Cardiac septum (tissue), 1 donor: ENCODE measurements at regions of chr18 and their contacts with region 1.

Region 1: GRCh38 chr18:58864146-58865032 is at the start of gene ZNF532:
- DNase-seq: no peak
- total RNA-seq, gene ZNF532: 71.8 TPM

Region 2: DNA sequence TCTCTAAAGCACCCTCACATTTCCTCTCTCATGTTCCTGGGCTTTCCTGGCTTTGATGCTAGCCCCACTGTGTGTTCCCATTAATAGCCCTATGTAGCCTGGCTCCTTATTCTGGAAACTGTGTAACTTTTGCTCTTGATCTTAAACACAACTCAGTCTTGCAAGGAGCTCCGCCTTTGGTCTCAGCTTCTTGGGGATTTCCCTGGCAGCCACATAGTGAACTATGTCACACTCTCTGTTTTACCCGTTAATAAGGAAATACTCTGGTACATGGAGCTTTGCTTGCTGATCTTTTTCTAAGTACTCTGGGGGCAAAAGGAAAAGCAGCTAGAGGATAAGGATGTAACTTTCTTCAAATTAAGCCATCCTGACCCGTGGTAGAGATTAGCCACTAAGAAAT is 561.0 kb before region 1 on chr18:
- intact Hi-C with region 1: no loop called
- DNase-seq: no peak

Region 3: DNA sequence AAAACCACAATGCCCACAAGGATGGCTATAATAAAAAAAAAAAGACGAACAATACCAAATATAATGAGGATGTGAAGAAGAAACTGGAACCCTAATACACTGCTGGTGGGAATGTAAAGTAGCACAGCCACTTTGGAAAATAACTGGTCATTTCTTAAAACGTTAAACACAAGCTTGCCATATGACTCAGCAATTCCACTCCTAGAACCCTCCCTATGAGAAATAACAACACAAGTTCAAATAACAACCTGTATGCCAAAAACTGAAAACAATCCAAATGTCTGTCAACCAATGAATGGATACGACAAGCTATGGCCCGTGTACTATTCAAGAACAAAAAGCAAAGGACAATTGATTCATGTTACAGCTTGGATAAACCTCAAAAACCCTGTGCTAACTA is 228.5 kb before region 1 on chr18:
- intact Hi-C with region 1: no loop called
- DNase-seq: no peak

Region 4: DNA sequence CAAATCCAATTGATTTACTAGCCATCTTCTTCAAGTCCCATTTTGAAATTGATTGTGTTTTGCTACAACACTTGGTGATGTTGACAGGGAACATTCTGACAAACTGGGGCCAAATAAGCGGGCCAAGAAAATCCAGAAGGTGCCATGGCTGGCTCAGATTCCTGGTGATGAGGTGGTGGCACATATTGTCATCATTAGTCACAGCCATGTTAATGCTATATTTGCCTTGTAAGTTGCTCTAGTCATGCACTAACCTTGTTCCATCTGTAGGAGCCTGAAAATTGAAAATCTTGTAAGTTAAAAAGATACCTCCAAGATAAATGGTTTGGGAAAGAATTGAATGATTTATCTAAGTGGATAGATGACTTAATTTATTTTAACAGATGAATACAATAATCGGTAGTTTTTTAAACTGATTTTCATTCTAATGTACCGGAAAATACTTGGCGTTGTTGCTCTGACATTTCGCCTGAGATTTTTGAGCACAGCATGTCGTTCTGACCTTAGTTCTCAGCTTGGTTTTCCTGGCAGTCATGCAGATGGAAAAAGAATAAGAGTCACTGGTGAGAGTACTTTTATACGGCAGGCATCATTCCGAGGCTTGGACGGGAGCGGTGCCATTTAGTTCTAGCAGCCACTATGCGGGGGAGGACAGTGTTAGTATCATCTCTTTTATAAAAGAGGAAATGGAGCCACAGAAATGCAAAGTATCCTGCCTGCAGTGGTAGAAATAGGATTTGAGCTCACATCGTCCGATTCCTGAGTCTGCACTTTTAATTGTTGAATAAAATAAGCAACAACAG is 134.2 kb after region 1 on chr18:
- intact Hi-C with region 1: loop called (anchors 1 kb)
- DNase-seq: no peak

Region 5: DNA sequence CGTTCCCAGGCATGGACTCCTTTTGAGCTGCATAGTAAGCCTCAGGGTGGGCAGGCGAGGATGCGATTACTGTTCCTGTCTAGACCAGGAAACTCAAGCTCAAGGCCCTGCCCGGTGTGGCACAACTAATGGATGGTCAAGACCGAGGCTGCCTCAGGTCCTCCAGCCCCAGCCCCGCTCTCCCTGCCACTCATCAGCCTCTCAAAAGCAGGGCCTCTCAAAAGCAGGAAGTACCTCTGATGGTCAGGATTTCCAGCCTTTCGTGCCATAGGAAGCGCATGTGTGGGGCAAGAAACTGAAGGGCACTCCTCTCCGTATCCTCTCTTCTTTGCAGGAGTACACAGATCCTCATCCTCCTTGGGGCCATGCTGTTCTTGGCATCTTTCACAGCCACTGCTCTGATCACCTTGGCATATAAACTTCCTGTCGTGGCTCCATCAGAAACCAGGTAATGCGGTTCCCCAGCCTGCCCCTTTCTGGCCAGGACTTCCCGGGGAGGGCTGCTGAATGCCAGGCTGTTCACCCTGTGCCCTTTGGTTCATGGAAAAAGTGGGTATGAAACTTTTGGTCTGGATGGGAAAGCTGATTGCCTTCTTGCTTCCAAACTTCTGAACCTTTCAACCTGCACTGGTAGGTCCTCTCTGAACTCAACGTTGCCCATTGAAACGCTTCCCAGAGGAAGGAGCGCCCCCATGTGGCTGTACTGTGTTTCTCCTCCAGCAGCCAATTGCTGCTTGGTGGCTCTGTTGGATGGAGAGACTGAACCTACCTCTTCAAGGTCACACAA is 192.5 kb after region 1 on chr18:
- intact Hi-C with region 1: loop called (anchors 5 kb)
- DNase-seq: peak; percentile 82